Activated CD4-positive, alpha-beta T cell treated with anti-CD3 and anti-CD28 coated beads for 36 hours (primary cell): ENCODE measurements at regions of chr6 and their contacts with region 1.

Region 1: DNA sequence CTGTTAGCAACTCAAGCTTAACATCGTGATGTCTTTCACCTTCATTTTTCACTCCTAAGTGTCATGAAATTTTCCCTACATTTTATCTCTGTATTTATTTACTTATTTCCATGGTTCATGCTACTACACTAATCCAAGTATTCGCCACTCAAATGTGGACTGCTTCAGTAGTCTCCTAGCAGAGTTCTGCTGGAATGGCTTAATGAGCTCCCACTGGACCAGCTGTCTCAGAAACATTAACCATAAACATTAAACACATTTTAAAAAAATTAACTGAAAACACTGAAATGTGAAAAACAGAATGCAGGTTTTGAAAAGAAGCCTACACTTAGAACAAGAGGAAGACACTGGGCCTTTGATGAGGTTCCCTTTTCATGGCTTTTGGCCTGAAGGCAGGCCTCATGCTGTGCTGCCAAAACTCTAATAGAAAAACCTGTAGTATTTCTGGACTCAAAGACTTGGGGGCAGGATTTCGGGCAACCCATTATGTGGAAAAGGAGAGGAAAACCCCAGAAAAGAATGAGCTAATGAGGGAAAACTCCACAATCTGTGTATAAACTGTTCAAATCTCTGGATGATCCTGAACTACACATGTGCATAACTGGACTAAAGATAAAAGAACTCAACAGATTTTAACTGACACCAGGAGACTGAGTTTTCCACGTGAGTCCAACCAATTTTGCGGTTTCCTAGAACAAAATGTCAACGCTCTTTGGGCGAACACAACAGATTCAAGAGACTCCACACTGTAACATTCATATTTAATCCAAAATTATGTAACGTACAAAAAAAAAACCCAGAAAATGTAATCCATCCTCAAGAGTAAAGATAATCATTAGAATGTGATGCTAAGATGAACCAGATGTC is 33.0 kb downstream of the SAMD3 start:
- DNase-seq: no peak
- ATAC-seq: no peak
- H3K4me3 Mint-ChIP-seq: no peak overlapping the region
- H3K27ac Mint-ChIP-seq: peak overlapping the region; percentile 13
- H3K4me1 Mint-ChIP-seq: peaks cover 76% of the 10 kb centered on the region
- H3K27me3 Mint-ChIP-seq: no peaks in the 10 kb centered on the region

Region 2: DNA sequence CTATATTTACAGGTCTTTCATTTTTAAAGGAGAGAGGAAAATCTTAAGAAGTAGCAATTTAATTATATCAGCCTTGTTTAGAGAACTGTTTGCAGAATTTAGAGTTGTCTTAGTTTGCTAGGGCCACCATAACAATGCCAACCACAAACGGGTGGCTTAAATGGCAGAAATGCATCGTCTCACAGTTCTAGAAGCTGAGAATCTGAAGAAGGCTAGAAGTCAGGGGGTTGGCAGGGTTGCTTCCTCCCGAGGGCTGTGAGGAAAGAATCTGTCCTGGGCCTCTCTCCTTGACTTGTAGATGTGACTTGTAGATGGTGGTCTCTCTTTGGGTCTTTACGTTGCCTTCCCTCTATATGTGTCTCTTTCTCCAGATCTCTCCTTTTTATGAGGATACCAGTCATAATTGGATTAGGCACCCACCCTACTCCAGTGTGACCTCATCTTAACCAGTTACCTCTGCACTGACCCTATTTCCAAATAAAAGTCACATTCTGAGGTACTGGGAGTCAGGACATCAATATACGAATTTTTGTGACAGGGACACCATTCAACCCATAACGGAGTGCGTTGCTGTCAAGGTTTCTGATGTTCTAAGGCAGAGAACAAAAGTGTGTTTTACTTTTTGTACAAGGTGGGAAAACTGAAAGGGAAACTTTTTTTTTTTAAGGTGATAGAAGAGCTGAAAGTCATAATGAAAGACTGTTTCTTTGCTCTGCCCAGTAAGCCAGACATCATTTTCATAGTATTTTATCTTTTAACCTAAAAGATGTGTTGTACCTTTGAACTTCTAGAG is 51.5 kb before region 1 on chr6:
- CTCF ChIA-PET with region 1: no interaction called
- POLR2A ChIA-PET with region 1: no interaction called
- intact Hi-C with region 1: loop called in 1 of 2 experiments (anchors 5 kb)
- DNase-seq: no peak
- ATAC-seq: peak; percentile 74
- H3K4me3 Mint-ChIP-seq: peak overlapping the region; percentile 56
- H3K27ac Mint-ChIP-seq: peak overlapping the region; percentile 78
- H3K4me1 Mint-ChIP-seq: peaks cover 65% of the 10 kb centered on the region
- H3K27me3 Mint-ChIP-seq: no peaks in the 10 kb centered on the region

Region 3: GRCh38 chr6:130178692-130179091 is 11.1 kb before region 1 on chr6:
- CTCF ChIA-PET with region 1: interaction called, 10 read pairs
- POLR2A ChIA-PET with region 1: no interaction called
- intact Hi-C with region 1: no loop called
- DNase-seq: no peak
- ATAC-seq: peak; percentile 42
- H3K4me3 Mint-ChIP-seq: no peak overlapping the region
- H3K27ac Mint-ChIP-seq: no peak overlapping the region
- H3K4me1 Mint-ChIP-seq: peaks cover 21% of the 10 kb centered on the region
- H3K27me3 Mint-ChIP-seq: no peaks in the 10 kb centered on the region

Region 4: GRCh38 chr6:130223508-130223907 is 33.7 kb after region 1 on chr6:
- CTCF ChIA-PET with region 1: interaction called, 3 read pairs
- POLR2A ChIA-PET with region 1: no interaction called
- intact Hi-C with region 1: loop called in 1 of 2 experiments (anchors 2 kb)
- DNase-seq: peak; percentile 82
- ATAC-seq: peak; percentile 98
- H3K4me3 Mint-ChIP-seq: no peak overlapping the region
- H3K27ac Mint-ChIP-seq: no peak overlapping the region
- H3K4me1 Mint-ChIP-seq: peaks cover 34% of the 10 kb centered on the region
- H3K27me3 Mint-ChIP-seq: no peaks in the 10 kb centered on the region